Activated CD8-positive, alpha-beta memory T cell treated with anti-CD3 and anti-CD28 coated beads, Interleukin-2, amount 10 ng/mL, durations not matched to agents 7 days and 5 days (primary cell): ENCODE measurements at regions of chrX and their contacts with region 1.

Region 1: DNA sequence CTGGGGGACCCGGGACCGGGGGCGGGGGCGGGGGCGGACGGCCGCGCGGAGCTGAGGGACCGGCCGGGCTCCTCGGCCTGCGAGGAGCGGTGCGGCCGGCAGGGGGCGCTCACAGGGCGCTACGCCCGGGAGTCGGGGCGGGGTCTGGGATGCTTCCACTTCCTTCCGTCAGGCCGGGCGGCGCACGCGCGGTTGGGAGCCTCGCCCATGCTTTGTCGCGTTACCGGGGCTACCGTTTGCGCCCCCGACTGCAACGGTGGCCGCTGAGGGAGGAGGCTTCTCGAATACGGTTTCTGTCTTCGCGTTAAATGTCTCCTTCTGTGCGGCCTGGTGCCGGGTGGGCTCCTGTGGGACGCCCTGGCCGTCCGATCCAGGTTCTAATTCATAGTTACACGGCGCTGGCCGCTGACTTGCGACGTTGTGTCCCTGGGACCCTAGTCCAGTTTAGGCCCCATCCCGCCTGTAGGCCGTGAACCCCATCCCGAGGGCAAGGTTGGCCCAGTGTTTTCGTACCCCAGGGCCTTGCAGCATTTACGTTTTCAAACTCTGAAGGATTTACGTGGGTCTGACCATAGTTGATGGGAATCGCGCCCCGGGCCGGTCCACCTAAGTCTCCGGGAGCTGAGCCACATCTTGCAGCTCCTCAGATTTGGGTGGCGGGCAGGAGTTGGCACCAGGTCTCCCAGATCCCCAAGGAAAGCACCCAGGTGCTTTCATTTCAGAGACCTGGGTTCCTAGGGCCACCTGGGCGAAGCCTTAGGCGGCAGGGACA is 549 bp downstream of the MSL3 start:
- DNase-seq: peak; percentile 91
- ATAC-seq: peak; percentile 65
- H3K4me3 Mint-ChIP-seq: peak overlapping the region; percentile 84
- H3K27ac Mint-ChIP-seq: peak overlapping the region; percentile 97
- H3K4me1 Mint-ChIP-seq: peaks cover 22% of the 10 kb centered on the region
- H3K27me3 Mint-ChIP-seq: peaks cover 20% of the 10 kb centered on the region

Region 2: GRCh38 chrX:11770320-11770719 is 11.7 kb after region 1 on chrX:
- CTCF ChIA-PET with region 1: interaction called, 18 read pairs
- DNase-seq: peak; percentile 57
- ATAC-seq: peak; percentile 77
- H3K4me3 Mint-ChIP-seq: no peak overlapping the region
- H3K27ac Mint-ChIP-seq: peak overlapping the region; percentile 74
- H3K4me1 Mint-ChIP-seq: peaks cover 32% of the 10 kb centered on the region
- H3K27me3 Mint-ChIP-seq: no peaks in the 10 kb centered on the region

Region 3: DNA sequence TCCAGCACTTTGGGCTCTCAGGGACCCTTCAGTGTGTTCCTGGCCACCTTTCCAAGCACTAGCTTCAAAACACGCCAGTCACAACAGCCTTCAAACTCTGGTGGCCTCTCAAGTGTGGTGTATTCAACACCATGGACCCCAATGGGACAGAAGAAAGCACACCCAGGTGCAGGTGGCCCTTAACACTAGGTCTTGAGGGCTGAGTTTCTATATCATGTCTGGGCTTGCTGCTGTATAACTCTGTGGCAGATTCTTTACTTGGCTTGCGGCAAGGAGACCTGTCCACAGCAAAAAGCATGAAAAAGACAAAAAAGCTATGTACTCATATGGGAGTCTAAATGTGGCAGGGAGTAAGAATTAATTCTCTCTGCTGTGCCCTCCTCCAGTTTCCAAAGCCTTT is 22.5 kb after region 1 on chrX:
- CTCF ChIA-PET with region 1: no interaction called
- DNase-seq: no peak
- ATAC-seq: no peak
- H3K4me3 Mint-ChIP-seq: no peak overlapping the region
- H3K27ac Mint-ChIP-seq: no peak overlapping the region
- H3K4me1 Mint-ChIP-seq: no peaks in the 10 kb centered on the region
- H3K27me3 Mint-ChIP-seq: no peaks in the 10 kb centered on the region